T-cell (primary cell): ENCODE measurements at regions of chr3 and their contacts with region 1.

Region 1: GRCh38 chr3:172586436-172586835 is 63.2 kb upstream of the TNFSF10 start:
- DNase-seq: no peak
- ATAC-seq: no peak
- H3K4me3 ChIP-seq: no peak overlapping the region
- H3K4me3 Mint-ChIP-seq: peak overlapping the region in 1 of 3 donors; percentile 16
- H3K27ac ChIP-seq: no peak overlapping the region
- H3K27ac Mint-ChIP-seq: peak overlapping the region; percentile 37 to 54
- H3K4me1 ChIP-seq: peaks cover 5 to 15% of the 10 kb centered on the region in 2 experiments
- H3K4me1 Mint-ChIP-seq: peaks cover 64 to 84% (median 82%) of the 10 kb centered on the region in 3 donors
- H3K27me3 ChIP-seq: no peaks in the 10 kb centered on the region
- H3K27me3 Mint-ChIP-seq: no peaks in the 10 kb centered on the region

Region 2: DNA sequence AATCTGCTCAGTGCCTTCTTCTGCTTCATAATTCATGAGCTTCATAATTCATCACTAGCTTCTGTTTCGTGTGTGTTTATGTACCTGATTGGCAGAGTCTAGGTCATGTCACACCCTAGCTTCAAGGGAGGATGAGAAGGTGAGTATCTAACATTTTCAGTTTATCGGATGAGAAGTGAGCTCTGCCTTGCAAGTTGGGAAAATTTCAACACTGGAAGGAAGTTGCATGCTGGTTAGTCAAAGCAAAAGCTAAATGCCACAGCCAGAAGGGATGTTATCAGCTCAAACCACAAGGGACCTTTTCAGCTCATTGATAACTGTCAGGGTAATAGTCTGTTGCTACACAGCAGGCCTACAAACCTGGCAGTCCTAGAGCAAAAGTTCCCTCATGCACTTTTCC is 55.9 kb before region 1 on chr3:
- CTCF ChIA-PET with region 1: interaction called in 1 of 2 experiments, 8 read pairs
- POLR2A ChIA-PET with region 1: interaction called in 1 of 2 experiments, 10 read pairs
- DNase-seq: peak in 3 of 35 experiments; percentile 4 to 49 (median 5)
- ATAC-seq: peak; percentile 77 to 82 (median 78)
- H3K4me3 ChIP-seq: no peak overlapping the region
- H3K4me3 Mint-ChIP-seq: peak overlapping the region in 1 of 3 donors; percentile 54
- H3K27ac ChIP-seq: peak overlapping the region; percentile 18
- H3K27ac Mint-ChIP-seq: peak overlapping the region; percentile 84 to 87
- H3K4me1 ChIP-seq: peaks cover 14 to 18% of the 10 kb centered on the region in 2 experiments
- H3K4me1 Mint-ChIP-seq: peaks cover 19 to 28% (median 20%) of the 10 kb centered on the region in 3 donors
- H3K27me3 ChIP-seq: no peaks in the 10 kb centered on the region
- H3K27me3 Mint-ChIP-seq: no peaks in the 10 kb centered on the region